Tibial artery (tissue), 4 donors: ENCODE measurements at regions of chr16 and their contacts with region 1.

Region 1: DNA sequence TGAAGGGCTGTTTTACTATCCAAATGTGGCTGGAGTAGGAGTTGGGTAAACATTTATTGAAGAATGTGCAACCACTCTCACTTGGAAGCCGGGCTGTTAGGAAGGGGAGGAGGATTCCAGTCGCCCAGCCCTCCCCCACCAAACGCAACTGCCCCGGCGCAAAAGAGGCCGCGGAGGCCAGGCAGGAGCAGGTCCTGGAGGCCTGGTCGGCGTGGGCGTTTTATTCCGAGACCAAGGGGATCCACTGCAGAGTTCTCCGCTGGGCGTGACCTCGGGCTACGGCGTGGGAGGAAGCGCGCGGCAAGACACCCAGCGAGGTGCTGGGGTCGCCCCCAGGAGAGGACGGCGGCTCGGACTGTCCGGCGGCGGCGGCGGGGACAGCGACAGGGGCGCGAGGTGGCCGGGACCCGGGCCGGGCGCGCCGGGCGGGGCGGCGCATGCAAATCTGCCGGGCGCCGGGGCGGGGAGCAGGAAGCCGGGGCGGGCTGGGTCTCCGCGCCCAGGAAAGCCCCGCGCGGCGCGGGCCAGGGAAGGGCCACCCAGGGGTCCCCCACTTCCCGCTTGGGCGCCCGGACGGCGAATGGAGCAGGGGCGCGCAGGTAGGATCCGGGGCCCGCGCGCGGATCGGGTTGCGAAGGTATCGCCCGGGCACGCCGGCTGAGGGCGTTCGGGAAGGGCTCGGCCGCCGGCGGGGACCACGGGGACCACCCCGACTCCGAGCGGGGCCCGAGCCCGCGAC is at the start of gene IL4R:
- DNase-seq: peak; percentile 76 to 91
- H3K4me3 ChIP-seq: peak within 1 kb of the TSS; percentile 92 to 96
- H3K27ac ChIP-seq: peak within 1 kb of the TSS; percentile 97 to 99
- H3K4me1 ChIP-seq: peaks cover 0 to 47% (median 36%) of the 10 kb centered on the region in 4 donors
- H3K27me3 ChIP-seq: no peaks in the 10 kb centered on the region
- CTCF ChIP-seq: no peak

Region 2: GRCh38 chr16:27242868-27243590 is 70.6 kb before region 1 on chr16:
- intact Hi-C with region 1: loop called (anchors 5 kb)
- DNase-seq: peak; percentile 72 to 82
- H3K4me3 ChIP-seq: peak overlapping the region; percentile 34 to 42
- H3K27ac ChIP-seq: peak overlapping the region; percentile 78 to 80
- H3K4me1 ChIP-seq: peaks cover 0 to 71% (median 53%) of the 10 kb centered on the region in 4 donors
- H3K27me3 ChIP-seq: no peaks in the 10 kb centered on the region
- CTCF ChIP-seq: no peak

Region 3: GRCh38 chr16:27414758-27415431 is 101.3 kb after region 1 on chr16:
- intact Hi-C with region 1: no loop called
- DNase-seq: no peak
- H3K4me3 ChIP-seq: no peak overlapping the region
- H3K27ac ChIP-seq: no peak overlapping the region
- H3K4me1 ChIP-seq: no peaks in the 10 kb centered on the region
- H3K27me3 ChIP-seq: no peaks in the 10 kb centered on the region
- CTCF ChIP-seq: no peak

Region 4: GRCh38 chr16:28863929-28864793 is 1550.6 kb after region 1 on chr16:
- intact Hi-C with region 1: loop called (anchors 5 kb)
- DNase-seq: no peak
- H3K4me3 ChIP-seq: peak overlapping the region; percentile 87 to 97
- H3K27ac ChIP-seq: peak overlapping the region; percentile 87 to 94
- H3K4me1 ChIP-seq: peaks cover 0 to 32% (median 16%) of the 10 kb centered on the region in 4 donors
- H3K27me3 ChIP-seq: no peaks in the 10 kb centered on the region
- CTCF ChIP-seq: no peak